Calu3 (cell line): ENCODE measurements at regions of chr1 and their contacts with region 1.

Region 1: GRCh38 chr1:245216366-245217115 is 61.8 kb downstream of the KIF26B start:
- DNase-seq: no peak
- H3K4me3 Mint-ChIP-seq: no peak overlapping the region
- H3K27ac Mint-ChIP-seq: no peak overlapping the region
- H3K4me1 Mint-ChIP-seq: no peaks in the 10 kb centered on the region
- H3K27me3 Mint-ChIP-seq: no peaks in the 10 kb centered on the region
- CTCF ChIP-seq: no peak

Region 2: GRCh38 chr1:245000872-245001188 is 215.7 kb before region 1 on chr1:
- CTCF ChIA-PET with region 1: no interaction called
- intact Hi-C with region 1: no loop called
- DNase-seq: no peak
- H3K4me3 Mint-ChIP-seq: no peak overlapping the region
- H3K27ac Mint-ChIP-seq: no peak overlapping the region
- H3K4me1 Mint-ChIP-seq: no peaks in the 10 kb centered on the region
- H3K27me3 Mint-ChIP-seq: no peaks in the 10 kb centered on the region
- CTCF ChIP-seq: no peak

Region 3: DNA sequence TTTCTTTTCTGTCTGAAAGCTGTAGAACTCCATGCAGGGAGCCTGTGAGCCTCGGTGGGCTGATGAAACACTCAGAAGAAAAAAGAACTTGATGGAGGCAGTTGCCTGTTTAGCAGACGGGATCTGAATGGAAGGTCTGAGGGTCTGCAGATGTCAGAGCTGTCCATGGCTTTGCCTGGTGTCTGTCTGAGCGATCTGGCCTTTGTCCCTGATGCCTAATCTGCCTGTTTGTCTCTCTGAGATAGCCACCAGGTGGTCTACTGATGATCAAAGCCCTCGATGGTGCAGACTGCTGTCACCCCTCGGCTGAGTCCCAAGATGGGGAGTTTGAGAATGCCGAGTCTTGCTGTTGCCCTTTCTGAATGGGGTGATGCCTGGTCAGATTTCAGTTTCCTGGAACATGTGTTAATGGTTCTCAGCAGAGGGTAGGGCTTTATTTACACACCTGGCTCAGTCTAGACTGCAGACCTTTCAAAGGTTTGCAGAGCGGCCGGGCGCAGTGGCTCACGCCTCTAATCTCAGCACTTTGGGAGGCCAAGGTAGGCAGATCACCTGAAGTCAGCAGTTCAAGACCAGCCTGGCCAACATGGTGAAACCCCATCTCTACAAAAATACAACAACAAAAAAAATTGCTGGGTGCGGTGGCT is 28.6 kb after region 1 on chr1:
- CTCF ChIA-PET with region 1: interaction called, 14 read pairs
- intact Hi-C with region 1: no loop called
- DNase-seq: peak; percentile 62
- H3K4me3 Mint-ChIP-seq: no peak overlapping the region
- H3K27ac Mint-ChIP-seq: no peak overlapping the region
- H3K4me1 Mint-ChIP-seq: no peaks in the 10 kb centered on the region
- H3K27me3 Mint-ChIP-seq: no peaks in the 10 kb centered on the region
- CTCF ChIP-seq: no peak

Region 4: GRCh38 chr1:245448975-245449431 is 232.5 kb after region 1 on chr1:
- CTCF ChIA-PET with region 1: no interaction called
- intact Hi-C with region 1: no loop called
- DNase-seq: no peak
- H3K4me3 Mint-ChIP-seq: no peak overlapping the region
- H3K27ac Mint-ChIP-seq: no peak overlapping the region
- H3K4me1 Mint-ChIP-seq: no peaks in the 10 kb centered on the region
- H3K27me3 Mint-ChIP-seq: peaks cover under 1% of the 10 kb centered on the region
- CTCF ChIP-seq: no peak

Region 5: DNA sequence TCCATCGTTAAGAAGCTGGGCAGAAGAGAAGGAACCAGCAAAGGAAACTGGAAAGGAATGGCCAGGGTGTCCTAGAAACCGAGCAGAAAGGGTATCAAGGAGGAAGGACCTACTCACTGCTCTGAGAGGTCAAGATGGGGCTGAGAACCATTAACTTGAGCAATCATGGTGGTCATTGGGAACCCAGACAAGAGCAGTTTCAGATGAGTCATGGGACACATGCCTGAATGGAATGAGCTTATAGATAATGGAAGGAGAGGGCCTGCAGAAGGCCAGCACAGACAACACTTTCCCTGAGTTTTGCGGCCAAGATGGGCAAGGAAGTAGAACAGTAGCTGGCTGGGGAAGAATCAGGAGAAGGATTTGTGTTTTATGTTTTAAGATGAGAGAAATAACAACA is 321.5 kb after region 1 on chr1:
- CTCF ChIA-PET with region 1: no interaction called
- intact Hi-C with region 1: no loop called
- DNase-seq: no peak
- H3K4me3 Mint-ChIP-seq: no peak overlapping the region
- H3K27ac Mint-ChIP-seq: no peak overlapping the region
- H3K4me1 Mint-ChIP-seq: no peaks in the 10 kb centered on the region
- H3K27me3 Mint-ChIP-seq: peaks cover 16% of the 10 kb centered on the region
- CTCF ChIP-seq: no peak